ENCODE measurements at regions of chr6 and their contacts with region 1.

Region 1: GRCh38 chr6:34236131-34236996 is at the start of gene HMGA1:
- DNase-seq: peak; percentile 83 to 92 (median 85)
- H3K4me3 ChIP-seq: peak within 1 kb of the TSS; percentile 57 to 79
- H3K4me3 Mint-ChIP-seq: peak within 1 kb of the TSS; percentile 91 to 99 (median 94)
- H3K27ac ChIP-seq: peak within 1 kb of the TSS; percentile 97
- H3K27ac Mint-ChIP-seq: peak within 1 kb of the TSS; percentile 97 to 100 (median 99)
- H3K4me1 ChIP-seq: peaks cover 28% of the 10 kb centered on the region
- H3K4me1 Mint-ChIP-seq: peaks cover 14 to 48% (median 28%) of the 10 kb centered on the region in 4 donors
- H3K27me3 ChIP-seq: no peaks in the 10 kb centered on the region
- H3K27me3 Mint-ChIP-seq: no peaks in the 10 kb centered on the region
- total RNA-seq, gene HMGA1: 74.7 to 77.5 TPM

Region 2: DNA sequence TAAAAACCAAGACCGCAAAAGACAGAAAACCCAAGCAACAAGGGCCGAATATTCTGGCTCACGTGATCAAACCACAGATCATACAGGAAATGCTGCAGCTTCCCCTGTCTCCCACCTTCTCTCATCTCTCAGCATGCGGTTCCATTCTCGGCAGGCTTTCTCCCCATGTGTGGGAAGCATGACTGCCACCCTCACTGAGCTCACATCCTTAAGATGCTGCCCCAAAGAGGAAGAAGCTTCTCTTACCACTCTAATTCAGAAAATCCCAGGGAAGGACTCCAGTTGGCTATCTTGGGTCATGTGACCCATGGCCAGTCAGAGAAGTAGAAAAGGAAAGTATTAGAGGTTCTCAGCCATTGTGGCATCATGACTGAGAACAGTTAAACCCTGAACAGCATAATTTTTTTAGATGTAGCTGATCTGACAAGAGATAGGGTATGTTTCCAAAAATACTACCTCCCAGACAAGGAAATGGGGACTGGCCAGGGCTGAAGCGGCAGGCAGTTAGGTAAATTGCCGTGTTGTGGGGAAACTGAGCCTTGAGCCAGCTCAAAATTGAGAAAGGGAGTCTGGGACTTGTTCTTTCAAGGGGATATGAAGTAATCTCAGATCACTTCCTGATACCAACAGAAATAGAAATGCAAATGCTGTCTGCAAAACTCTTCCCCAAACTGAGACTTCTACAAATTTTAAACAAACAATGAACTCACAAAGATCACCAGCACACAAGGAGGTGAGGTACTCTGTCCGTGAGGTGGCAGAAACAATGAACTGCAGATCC is 53.4 kb before region 1 on chr6:
- CTCF ChIA-PET with region 1: interaction called, 3 read pairs
- POLR2A ChIA-PET with region 1: interaction called, 26 read pairs
- intact Hi-C with region 1: no loop called
- DNase-seq: peak; percentile 79 to 90 (median 81)
- H3K4me3 ChIP-seq: peak overlapping the region in 1 of 2 donors; percentile 32
- H3K4me3 Mint-ChIP-seq: peak overlapping the region; percentile 45 to 80 (median 74)
- H3K27ac ChIP-seq: peak overlapping the region; percentile 33
- H3K27ac Mint-ChIP-seq: peak overlapping the region; percentile 72 to 95 (median 82)
- H3K4me1 ChIP-seq: peaks cover 25% of the 10 kb centered on the region
- H3K4me1 Mint-ChIP-seq: peaks cover 22 to 26% (median 24%) of the 10 kb centered on the region in 4 donors
- H3K27me3 ChIP-seq: no peaks in the 10 kb centered on the region
- H3K27me3 Mint-ChIP-seq: no peaks in the 10 kb centered on the region

Region 3: GRCh38 chr6:34207695-34208443 is 28.5 kb before region 1 on chr6:
- CTCF ChIA-PET with region 1: no interaction called
- POLR2A ChIA-PET with region 1: no interaction called
- intact Hi-C with region 1: no loop called
- DNase-seq: no peak
- H3K4me3 ChIP-seq: no peak overlapping the region
- H3K4me3 Mint-ChIP-seq: peak overlapping the region in 2 of 8 donors; percentile 10 to 29
- H3K27ac ChIP-seq: no peak overlapping the region
- H3K27ac Mint-ChIP-seq: peak overlapping the region in 4 of 7 donors; percentile 13 to 79 (median 54)
- H3K4me1 ChIP-seq: peaks cover 8% of the 10 kb centered on the region
- H3K4me1 Mint-ChIP-seq: peaks cover 4 to 12% (median 6%) of the 10 kb centered on the region in 4 donors
- H3K27me3 ChIP-seq: no peaks in the 10 kb centered on the region
- H3K27me3 Mint-ChIP-seq: no peaks in the 10 kb centered on the region

Region 4: GRCh38 chr6:34223956-34224940 is 12.1 kb before region 1 on chr6:
- CTCF ChIA-PET with region 1: interaction called, 5 read pairs
- POLR2A ChIA-PET with region 1: interaction called, 140 read pairs
- intact Hi-C with region 1: loop called (anchors 1 kb)
- DNase-seq: peak; percentile 90 to 98 (median 94)
- H3K4me3 ChIP-seq: peak overlapping the region; percentile 77 to 86
- H3K4me3 Mint-ChIP-seq: peak overlapping the region; percentile 60 to 81 (median 74)
- H3K27ac ChIP-seq: peak overlapping the region; percentile 99
- H3K27ac Mint-ChIP-seq: peak overlapping the region; percentile 72 to 99 (median 96)
- H3K4me1 ChIP-seq: peaks cover 14% of the 10 kb centered on the region
- H3K4me1 Mint-ChIP-seq: peaks cover 4 to 13% (median 10%) of the 10 kb centered on the region in 4 donors
- H3K27me3 ChIP-seq: no peaks in the 10 kb centered on the region
- H3K27me3 Mint-ChIP-seq: no peaks in the 10 kb centered on the region

Region 5: GRCh38 chr6:34392497-34393190 is 156.3 kb after region 1 on chr6 and contains the start of gene NUDT3:
- CTCF ChIA-PET with region 1: interaction called, 3 read pairs
- POLR2A ChIA-PET with region 1: interaction called, 15 read pairs
- intact Hi-C with region 1: loop called (anchors 2 kb)
- DNase-seq: peak; percentile 92 to 97 (median 93)
- H3K4me3 ChIP-seq: peak within 1 kb of the TSS; percentile 73 to 78
- H3K4me3 Mint-ChIP-seq: peak within 1 kb of the TSS in 7 of 8 donors; percentile 74 to 99 (median 95)
- H3K27ac ChIP-seq: peak within 1 kb of the TSS; percentile 89
- H3K27ac Mint-ChIP-seq: peak within 1 kb of the TSS in 6 of 7 donors; percentile 75 to 96 (median 95)
- H3K4me1 ChIP-seq: peaks cover 24% of the 10 kb centered on the region
- H3K4me1 Mint-ChIP-seq: peaks cover 13 to 27% (median 18%) of the 10 kb centered on the region in 4 donors
- H3K27me3 ChIP-seq: no peaks in the 10 kb centered on the region
- H3K27me3 Mint-ChIP-seq: no peaks in the 10 kb centered on the region
- total RNA-seq, gene NUDT3: 25.9 TPM

Region 6: GRCh38 chr6:34414999-34415858 is 178.9 kb after region 1 on chr6:
- CTCF ChIA-PET with region 1: no interaction called
- POLR2A ChIA-PET with region 1: interaction called, 11 read pairs
- intact Hi-C with region 1: no loop called
- DNase-seq: peak; percentile 50 to 68 (median 51)
- H3K4me3 ChIP-seq: no peak overlapping the region
- H3K4me3 Mint-ChIP-seq: no peak overlapping the region
- H3K27ac ChIP-seq: no peak overlapping the region
- H3K27ac Mint-ChIP-seq: peak overlapping the region in 4 of 7 donors; percentile 2 to 86 (median 16)
- H3K4me1 ChIP-seq: no peaks in the 10 kb centered on the region
- H3K4me1 Mint-ChIP-seq: peaks cover 3 to 19% (median 5%) of the 10 kb centered on the region in 4 donors
- H3K27me3 ChIP-seq: no peaks in the 10 kb centered on the region
- H3K27me3 Mint-ChIP-seq: no peaks in the 10 kb centered on the region

Region 7: GRCh38 chr6:34425498-34426410 is 189.4 kb after region 1 on chr6 and contains the start of gene RPS10:
- CTCF ChIA-PET with region 1: no interaction called
- POLR2A ChIA-PET with region 1: interaction called, 14 read pairs
- intact Hi-C with region 1: no loop called
- DNase-seq: peak; percentile 85 to 90 (median 87)
- H3K4me3 ChIP-seq: peak within 1 kb of the TSS; percentile 80 to 95
- H3K4me3 Mint-ChIP-seq: peak within 1 kb of the TSS; percentile 97 to 99 (median 98)
- H3K27ac ChIP-seq: peak within 1 kb of the TSS; percentile 94
- H3K27ac Mint-ChIP-seq: peak within 1 kb of the TSS; percentile 96 to 99 (median 97)
- H3K4me1 ChIP-seq: peaks cover 30% of the 10 kb centered on the region
- H3K4me1 Mint-ChIP-seq: peaks cover 16 to 42% (median 32%) of the 10 kb centered on the region in 4 donors
- H3K27me3 ChIP-seq: no peaks in the 10 kb centered on the region
- H3K27me3 Mint-ChIP-seq: no peaks in the 10 kb centered on the region
- total RNA-seq, gene RPS10: 2,689 to 2,757 TPM

Region 8: GRCh38 chr6:34696739-34697543 is 460.6 kb after region 1 on chr6 and contains the start of gene ILRUN:
- CTCF ChIA-PET with region 1: no interaction called
- POLR2A ChIA-PET with region 1: no interaction called
- intact Hi-C with region 1: loop called (anchors 5 kb)
- DNase-seq: peak; percentile 92 to 96 (median 93)
- H3K4me3 ChIP-seq: peak within 1 kb of the TSS; percentile 96 to 97
- H3K4me3 Mint-ChIP-seq: peak within 1 kb of the TSS; percentile 95 to 100 (median 98)
- H3K27ac ChIP-seq: peak within 1 kb of the TSS; percentile 98
- H3K27ac Mint-ChIP-seq: peak within 1 kb of the TSS; percentile 93 to 100 (median 100)
- H3K4me1 ChIP-seq: peaks cover 48% of the 10 kb centered on the region
- H3K4me1 Mint-ChIP-seq: peaks cover 32 to 57% (median 45%) of the 10 kb centered on the region in 4 donors
- H3K27me3 ChIP-seq: no peaks in the 10 kb centered on the region
- H3K27me3 Mint-ChIP-seq: peaks cover 0 to 2% of the 10 kb centered on the region in 2 donors
- total RNA-seq, gene ILRUN: 68.6 to 70.7 TPM